ENCODE measurements at regions of chr11 and their contacts with region 1.

Region 1: DNA sequence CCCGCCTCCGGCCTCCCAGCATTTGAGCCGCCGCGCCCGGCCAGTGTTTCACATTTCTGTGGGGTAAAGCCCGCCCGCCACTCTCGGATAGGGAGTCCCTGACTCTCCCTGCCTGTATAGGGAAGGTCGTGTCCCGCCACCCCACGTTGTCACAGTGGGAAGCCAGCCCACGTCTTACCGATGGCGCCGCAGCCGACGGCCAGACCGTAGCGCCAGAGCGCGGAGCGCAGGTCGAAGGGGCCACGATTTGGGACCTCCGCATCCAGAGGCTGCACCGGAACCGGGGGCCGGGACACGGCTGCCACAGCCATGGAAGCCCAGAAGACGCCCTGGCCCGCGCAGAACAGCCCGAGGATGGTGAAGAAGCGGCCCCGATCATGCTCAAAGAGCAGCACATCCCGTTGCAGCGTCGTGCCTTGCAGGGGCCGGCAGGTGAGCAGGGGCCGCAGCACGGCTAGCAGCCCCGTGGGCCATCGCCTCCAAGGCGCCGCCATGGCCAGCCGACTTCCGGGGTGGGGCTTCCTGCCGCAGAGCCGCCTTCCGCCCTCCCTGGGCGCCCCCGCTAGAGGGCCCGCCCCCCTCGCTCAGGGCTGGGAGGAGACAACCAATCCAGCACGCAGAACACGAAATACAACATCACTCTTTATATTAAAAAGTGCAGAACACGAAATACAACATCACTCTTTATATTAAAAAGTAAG is at the start of gene TMEM223:
- DNase-seq: peak; percentile 83 to 98 (median 90)
- ATAC-seq: peak; percentile 90
- H3K4me3 ChIP-seq: peak within 1 kb of the TSS; percentile 88 to 95
- H3K27ac ChIP-seq: peak within 1 kb of the TSS; percentile 86
- H3K4me1 ChIP-seq: peaks cover 21 to 54% of the 10 kb centered on the region in 2 donors
- H3K27me3 ChIP-seq: no peaks in the 10 kb centered on the region
- CTCF ChIP-seq: peak in 1 of 2 donors; percentile 29
- polyA plus RNA-seq, gene TMEM223: 19.6 to 26.4 (median 20.7) TPM

Region 2: GRCh38 chr11:62508268-62509058 is 283.2 kb before region 1 on chr11:
- intact Hi-C with region 1: no loop called
- DNase-seq: peak in 3 of 4 donors; percentile 65 to 87 (median 79)
- ATAC-seq: peak; percentile 87
- H3K4me3 ChIP-seq: no peak overlapping the region
- H3K27ac ChIP-seq: peak overlapping the region; percentile 28 to 56
- H3K4me1 ChIP-seq: peaks cover 2 to 55% of the 10 kb centered on the region in 2 donors
- H3K27me3 ChIP-seq: peaks cover 0 to 17% of the 10 kb centered on the region in 2 donors
- CTCF ChIP-seq: peak; percentile 27 to 60

Region 3: GRCh38 chr11:62601394-62602140 is 190.1 kb before region 1 on chr11 and contains the start of gene MTA2:
- intact Hi-C with region 1: no loop called
- DNase-seq: peak; percentile 96 to 99 (median 98)
- ATAC-seq: peak; percentile 90
- H3K4me3 ChIP-seq: peak within 1 kb of the TSS; percentile 98
- H3K27ac ChIP-seq: peak within 1 kb of the TSS; percentile 96 to 97
- H3K4me1 ChIP-seq: peaks cover 25 to 53% of the 10 kb centered on the region in 2 donors
- H3K27me3 ChIP-seq: no peaks in the 10 kb centered on the region
- CTCF ChIP-seq: no peak
- polyA plus RNA-seq, gene MTA2: 90.1 to 110 (median 97.4) TPM

Region 4: DNA sequence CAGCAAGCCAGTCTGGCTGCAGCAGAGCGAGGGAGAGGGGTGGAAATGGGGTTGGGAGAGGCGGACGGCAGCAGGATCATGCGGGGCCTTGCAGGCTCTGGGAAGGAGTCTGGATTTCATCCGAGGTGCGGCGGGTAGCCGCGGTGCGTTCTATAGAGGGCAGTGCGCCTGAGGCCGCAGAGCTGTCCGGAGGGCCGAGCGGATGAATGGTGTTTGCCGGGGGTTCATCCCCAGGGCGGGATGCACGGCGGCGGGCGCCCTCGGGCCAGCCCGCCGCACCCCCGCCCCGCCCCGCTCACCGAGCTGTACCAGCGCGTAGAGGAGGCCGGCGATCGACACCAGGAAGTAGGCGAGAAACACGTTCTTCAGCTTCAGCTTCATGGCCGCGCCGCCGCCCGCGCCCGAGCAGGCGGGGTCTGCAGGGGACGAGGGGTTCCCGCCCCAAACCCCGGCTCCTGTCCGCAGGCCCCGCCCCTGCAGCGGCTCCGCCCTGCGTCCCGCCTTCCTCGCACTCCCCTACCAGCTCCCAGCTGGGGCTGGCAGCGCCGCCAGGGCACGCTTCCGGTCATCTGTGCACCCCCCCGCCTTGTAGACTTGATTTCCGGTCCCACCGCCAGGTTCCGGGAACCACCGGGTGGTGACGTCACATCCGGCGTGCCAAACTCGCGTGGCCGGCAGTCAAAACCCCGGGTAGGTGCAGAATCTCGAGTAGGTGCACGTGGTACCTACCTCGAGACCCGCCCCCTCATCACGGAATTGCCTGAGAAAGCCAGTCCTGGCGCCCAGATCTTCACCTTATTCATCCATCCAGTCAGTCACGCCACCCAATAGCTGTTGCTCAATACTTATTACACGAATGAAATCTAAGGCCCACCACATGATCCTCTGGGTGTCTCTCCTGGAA is 169.8 kb before region 1 on chr11 and contains the start of gene B3GAT3:
- intact Hi-C with region 1: no loop called
- DNase-seq: peak; percentile 98 to 100 (median 99)
- ATAC-seq: peak; percentile 99
- H3K4me3 ChIP-seq: peak within 1 kb of the TSS; percentile 59 to 82
- H3K27ac ChIP-seq: peak within 1 kb of the TSS; percentile 90 to 92
- H3K4me1 ChIP-seq: peaks cover 11 to 27% of the 10 kb centered on the region in 2 donors
- H3K27me3 ChIP-seq: no peaks in the 10 kb centered on the region
- CTCF ChIP-seq: peak in 1 of 2 donors; percentile 48
- polyA plus RNA-seq, gene B3GAT3: 19.0 to 35.6 (median 25.0) TPM

Region 5: DNA sequence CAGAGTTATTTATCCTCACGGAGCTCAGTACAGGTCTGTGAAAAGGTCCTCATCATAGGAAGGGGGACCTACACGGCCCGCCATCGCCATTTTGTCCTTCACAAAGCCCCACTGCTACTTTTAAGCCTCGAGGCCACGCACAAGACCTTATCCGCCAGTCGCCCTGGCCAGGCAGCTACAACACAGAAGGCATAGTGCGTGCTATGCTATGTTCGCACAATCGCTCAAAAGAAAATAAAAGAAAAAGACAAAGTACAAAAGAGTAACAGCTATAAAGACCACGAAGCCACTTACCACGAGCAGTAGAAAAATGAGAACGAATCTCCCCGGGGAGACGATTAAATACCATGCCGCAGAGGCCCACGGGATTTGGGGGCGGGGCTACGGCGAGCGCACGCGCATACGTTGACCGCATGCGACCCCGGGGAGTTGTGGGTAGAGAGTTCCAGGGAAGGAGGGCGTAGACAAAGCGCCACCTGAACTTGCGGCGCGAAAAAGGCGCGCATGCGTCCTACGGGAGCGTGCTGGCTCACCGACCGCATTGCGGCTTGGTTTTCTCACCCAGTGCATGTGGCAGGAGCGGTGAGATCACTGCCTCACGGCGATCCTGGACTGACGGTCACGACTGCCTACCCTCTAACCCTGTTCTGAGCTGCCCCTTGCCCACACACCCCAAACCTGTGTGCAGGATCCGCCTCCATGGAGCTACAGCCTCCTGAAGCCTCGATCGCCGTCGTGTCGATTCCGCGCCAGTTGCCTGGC is 64.1 kb after region 1 on chr11:
- intact Hi-C with region 1: loop called in 1 of 2 experiments (anchors 10 kb)
- DNase-seq: peak; percentile 97 to 99 (median 98)
- ATAC-seq: peak; percentile 98
- H3K4me3 ChIP-seq: peak overlapping the region; percentile 65 to 81
- H3K27ac ChIP-seq: peak overlapping the region; percentile 45 to 82
- H3K4me1 ChIP-seq: peaks cover 17 to 63% of the 10 kb centered on the region in 2 donors
- H3K27me3 ChIP-seq: no peaks in the 10 kb centered on the region
- CTCF ChIP-seq: no peak

Region 6: DNA sequence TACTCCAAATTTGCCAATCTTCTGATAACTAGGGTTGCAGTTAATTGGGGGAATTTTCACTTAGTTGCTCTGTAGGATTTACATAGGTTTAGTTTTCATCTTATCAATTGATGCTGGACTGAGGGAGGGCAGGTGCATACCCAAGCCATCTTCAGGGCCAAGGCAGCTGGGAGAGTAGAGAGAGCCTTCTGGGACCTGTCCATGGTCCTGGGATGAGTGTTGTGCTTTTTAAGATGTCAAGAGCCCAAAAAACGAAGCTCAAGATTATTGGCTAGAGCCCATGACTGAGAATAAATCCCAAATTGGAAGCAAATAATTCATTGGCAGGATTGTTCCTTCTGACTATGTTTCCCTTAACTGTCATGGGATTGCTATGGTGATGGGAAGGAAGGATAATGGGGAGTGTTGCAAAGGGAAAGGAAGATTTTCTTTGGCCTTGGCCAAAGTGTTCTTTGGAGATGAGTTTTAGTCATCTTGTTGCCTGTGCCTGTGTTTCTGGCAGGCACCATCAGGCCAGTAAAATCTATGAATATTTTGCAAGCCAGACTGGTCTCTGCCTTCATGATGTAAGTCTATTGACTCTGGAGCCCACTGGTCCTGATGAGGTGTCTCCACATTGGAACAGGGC is 188.6 kb after region 1 on chr11:
- intact Hi-C with region 1: no loop called
- DNase-seq: peak in 1 of 4 donors; percentile 7
- ATAC-seq: no peak
- H3K4me3 ChIP-seq: no peak overlapping the region
- H3K27ac ChIP-seq: no peak overlapping the region
- H3K4me1 ChIP-seq: no peaks in the 10 kb centered on the region
- H3K27me3 ChIP-seq: peaks cover 0 to 2% of the 10 kb centered on the region in 2 donors
- CTCF ChIP-seq: no peak